Activated naive CD4-positive, alpha-beta T cell treated with anti-CD3 and anti-CD28 coated beads for 36 hours (primary cell): ENCODE measurements at regions of chr11 and their contacts with region 1.

Region 1: GRCh38 chr11:32583459-32584271 is at the start of gene EIF3M:
- DNase-seq: peak; percentile 97
- H3K4me3 Mint-ChIP-seq: peak within 1 kb of the TSS; percentile 95
- H3K27ac Mint-ChIP-seq: peak within 1 kb of the TSS; percentile 94
- H3K4me1 Mint-ChIP-seq: peaks cover 38% of the 10 kb centered on the region
- H3K27me3 Mint-ChIP-seq: no peaks in the 10 kb centered on the region
- total RNA-seq, gene EIF3M: 342 to 358 TPM

Region 2: DNA sequence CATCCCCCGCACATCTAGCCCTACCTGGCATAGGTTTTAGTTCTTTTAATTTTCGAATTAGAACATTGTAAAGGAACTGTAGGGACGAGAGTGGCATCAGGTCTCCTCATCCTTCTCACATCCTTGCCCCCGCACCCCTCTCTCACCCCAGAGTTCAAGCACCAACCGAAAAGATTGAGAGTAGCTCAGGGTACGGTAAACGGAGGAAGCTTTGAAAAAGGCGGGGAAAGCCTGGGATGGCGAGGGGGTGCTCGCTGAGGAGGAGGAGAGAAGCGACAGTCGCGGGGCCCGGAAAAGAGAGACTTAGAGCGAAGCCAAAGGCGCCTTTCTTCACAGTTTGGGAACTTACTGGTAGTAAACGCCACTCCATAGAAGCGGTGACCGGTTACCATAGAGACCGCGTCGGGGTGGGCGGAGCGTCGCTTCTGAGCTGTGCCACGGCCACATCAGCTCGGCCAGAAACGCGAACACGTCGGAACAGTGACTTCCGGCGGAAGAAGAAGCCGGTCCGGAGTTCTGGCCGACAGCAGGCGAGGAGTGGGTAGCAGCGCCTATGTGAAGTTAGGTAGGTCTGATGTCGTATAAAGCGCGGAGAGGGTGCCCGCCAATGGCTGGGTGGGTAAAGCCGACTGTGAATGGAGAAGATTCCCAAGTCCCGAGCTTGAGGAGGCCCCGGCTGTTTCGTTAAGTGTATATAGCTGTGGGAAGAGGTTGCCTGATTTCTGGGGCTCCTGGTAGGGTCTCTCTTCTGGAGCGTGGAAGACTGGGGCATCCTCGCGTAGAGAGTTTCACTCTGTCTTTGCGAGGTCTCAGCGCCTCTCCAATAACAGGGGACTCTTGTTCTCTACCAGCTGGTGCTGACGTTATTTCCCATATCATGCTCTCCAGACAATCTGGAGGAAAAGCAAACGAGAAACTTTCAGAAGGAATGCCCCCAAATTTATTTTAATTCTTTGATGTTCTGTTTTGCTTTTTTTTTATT is 1214.0 kb before region 1 on chr11 and contains the starts of genes DCDC1 and DNAJC24:
- CTCF ChIA-PET with region 1: no interaction called
- intact Hi-C with region 1: loop called (anchors 5 kb)
- DNase-seq: peak; percentile 95
- H3K4me3 Mint-ChIP-seq: peak within 1 kb of the TSS; percentile 99
- H3K27ac Mint-ChIP-seq: peak within 1 kb of the TSS; percentile 91
- H3K4me1 Mint-ChIP-seq: peaks cover 55% of the 10 kb centered on the region
- H3K27me3 Mint-ChIP-seq: no peaks in the 10 kb centered on the region
- total RNA-seq, gene DCDC1: 0.25 TPM in 1 of 2 experiments, not detected in the other
- total RNA-seq, gene DNAJC24: 14.2 to 14.6 TPM

Region 3: DNA sequence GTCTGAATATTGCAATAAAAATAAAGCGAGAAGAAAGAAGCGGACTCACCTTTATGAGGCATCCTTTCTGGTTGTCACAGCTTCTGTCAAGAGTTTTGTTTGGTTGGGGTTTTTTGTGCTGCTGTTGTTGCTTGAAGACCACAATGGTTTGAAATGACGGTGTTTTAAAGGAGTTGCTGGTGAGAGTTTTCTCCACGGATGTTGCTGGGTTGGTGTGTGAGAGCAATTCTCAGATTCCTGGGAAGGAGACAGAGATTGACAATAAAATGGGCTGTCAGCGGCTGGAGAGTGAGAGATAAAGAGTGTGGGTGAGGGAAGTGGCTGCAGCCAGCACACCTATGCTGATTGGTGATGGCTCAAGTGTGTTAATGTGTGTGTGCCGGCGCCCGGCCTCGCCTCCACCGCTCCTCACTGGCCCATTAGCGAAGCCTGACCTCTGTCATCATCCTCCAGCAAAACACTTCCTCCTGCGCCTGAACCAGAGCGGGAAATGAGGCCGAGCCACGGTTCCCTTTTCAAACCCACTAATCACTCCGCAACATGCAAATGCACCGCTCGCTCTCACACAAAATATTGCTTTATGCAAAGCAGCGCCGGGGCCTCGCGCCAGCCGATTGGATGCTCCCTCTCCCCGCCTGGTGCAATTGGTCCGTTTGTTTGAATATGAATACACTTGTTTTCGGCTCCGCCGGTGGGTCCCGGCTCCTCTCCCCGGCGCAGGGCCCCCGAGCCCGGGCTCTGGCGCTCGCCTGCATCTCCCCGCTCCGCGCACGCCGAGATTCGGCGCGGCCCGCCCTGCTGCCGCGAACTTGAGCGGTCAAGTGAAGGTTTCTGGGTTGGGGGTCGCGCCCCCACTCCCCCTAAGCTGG is 772.7 kb before region 1 on chr11 and contains the start of gene PAX6:
- CTCF ChIA-PET with region 1: no interaction called
- intact Hi-C with region 1: loop called (anchors 10 kb)
- DNase-seq: peak; percentile 82
- H3K4me3 Mint-ChIP-seq: peak within 1 kb of the TSS; percentile 73
- H3K27ac Mint-ChIP-seq: no peak within 1 kb of the TSS
- H3K4me1 Mint-ChIP-seq: peaks cover 47% of the 10 kb centered on the region
- H3K27me3 Mint-ChIP-seq: peaks cover 76% of the 10 kb centered on the region
- total RNA-seq, gene PAX6: 1.5 TPM

Region 4: DNA sequence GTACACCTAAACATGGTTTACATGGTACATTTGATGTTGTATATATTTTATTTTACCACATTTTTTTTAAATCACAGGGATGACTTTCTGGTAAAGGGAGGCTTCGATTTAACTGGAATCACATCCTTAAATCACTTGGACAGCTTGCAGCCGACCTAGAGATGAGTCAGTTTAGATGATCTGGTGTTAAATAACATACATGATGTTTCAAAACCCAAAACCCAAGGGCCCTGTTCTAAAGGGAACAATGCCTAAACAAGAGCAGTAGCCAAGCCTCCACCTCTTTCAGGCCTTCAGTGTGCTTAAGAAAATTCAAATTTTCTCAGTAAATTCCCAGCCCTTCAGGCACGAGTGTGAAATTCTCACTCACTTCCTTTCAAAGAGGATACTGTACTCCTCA is 257.1 kb before region 1 on chr11:
- CTCF ChIA-PET with region 1: interaction called, 3 read pairs
- intact Hi-C with region 1: loop called (anchors 10 kb)
- DNase-seq: no peak
- H3K4me3 Mint-ChIP-seq: no peak overlapping the region
- H3K27ac Mint-ChIP-seq: no peak overlapping the region
- H3K4me1 Mint-ChIP-seq: no peaks in the 10 kb centered on the region
- H3K27me3 Mint-ChIP-seq: peaks cover 17% of the 10 kb centered on the region

Region 5: DNA sequence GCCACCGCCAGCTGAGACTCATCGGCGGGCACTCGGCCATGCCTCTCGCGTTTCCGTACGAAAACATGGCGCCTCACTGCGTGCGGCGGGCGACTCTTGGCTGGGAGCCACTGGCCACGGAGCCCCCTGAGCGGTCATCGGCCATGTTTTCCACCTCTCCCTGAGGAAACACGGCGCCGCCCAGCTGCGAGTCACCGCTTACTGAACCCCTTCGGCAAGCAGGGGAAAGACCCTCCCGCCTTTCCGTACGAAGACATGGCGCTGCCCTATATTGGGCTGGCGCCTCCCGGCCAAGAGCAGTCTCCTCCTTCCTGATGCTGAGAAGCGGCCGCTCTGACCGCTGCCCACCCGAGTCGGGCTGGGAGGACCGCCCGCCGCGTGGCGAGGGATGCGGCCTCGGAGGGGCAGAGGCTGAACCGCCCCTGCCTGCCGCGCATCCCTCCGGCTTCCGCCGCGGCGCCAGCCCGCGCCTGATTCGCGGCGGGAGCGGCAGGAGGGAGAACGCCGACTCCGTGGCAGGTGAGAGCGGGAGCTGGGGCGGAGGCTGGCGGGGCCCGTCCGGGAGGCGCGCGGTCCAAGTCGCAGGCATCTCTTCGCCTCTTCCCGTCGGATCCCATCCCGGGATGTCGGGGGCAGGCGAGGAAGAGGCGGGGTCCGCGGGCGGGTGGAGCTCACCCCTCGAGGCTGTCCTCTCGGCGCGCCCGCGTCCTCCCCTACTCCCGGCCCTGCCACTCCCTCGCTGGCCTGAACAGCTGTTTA is 455.8 kb after region 1 on chr11 and contains the start of gene TCP11L1:
- CTCF ChIA-PET with region 1: no interaction called
- intact Hi-C with region 1: loop called (anchors 2 kb)
- DNase-seq: peak; percentile 88
- H3K4me3 Mint-ChIP-seq: peak within 1 kb of the TSS; percentile 85
- H3K27ac Mint-ChIP-seq: peak within 1 kb of the TSS; percentile 92
- H3K4me1 Mint-ChIP-seq: peaks cover 25% of the 10 kb centered on the region
- H3K27me3 Mint-ChIP-seq: no peaks in the 10 kb centered on the region
- total RNA-seq, gene TCP11L1: 4.8 to 5.7 TPM

Region 6: DNA sequence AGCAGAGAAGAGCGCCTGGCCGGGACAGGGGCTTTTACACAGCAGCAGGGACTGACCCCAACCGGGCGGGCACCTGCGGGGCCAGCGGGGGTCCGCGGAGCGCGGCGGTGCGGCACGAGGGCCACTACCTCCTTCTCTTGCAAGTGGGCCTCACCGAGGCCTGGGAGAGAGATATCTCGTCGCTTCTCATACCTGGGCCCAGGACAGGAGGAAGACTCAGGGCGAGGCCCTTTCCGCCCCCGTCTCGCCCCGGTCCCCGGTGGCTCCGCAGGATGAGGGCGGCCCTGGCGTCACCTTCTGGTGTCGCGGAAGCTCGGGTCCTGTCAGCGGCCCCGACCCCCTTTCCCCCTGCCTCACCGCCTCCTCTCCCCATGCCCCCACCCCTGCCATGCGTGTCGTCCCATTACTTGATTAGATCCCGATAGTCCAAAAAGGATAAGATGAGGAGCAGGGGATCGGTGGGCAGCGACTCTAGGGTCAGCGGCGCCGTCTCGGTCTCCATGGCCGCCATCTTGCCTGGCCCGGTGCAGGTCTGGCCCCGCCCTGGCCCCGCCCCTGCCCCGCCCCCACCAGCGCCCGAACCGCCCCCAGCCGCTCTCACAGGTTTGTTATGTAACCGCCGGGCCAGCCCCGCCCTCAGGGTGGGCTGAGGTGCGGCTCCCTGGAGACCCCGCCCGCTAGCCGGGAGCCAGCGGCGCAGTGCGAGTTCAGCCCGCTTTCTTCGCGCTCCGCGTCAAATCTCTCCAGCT is 1190.5 kb after region 1 on chr11 and contains the start of gene FBXO3:
- CTCF ChIA-PET with region 1: no interaction called
- intact Hi-C with region 1: loop called (anchors 10 kb)
- DNase-seq: peak; percentile 82
- H3K4me3 Mint-ChIP-seq: peak within 1 kb of the TSS; percentile 90
- H3K27ac Mint-ChIP-seq: peak within 1 kb of the TSS; percentile 85
- H3K4me1 Mint-ChIP-seq: peaks cover 40% of the 10 kb centered on the region
- H3K27me3 Mint-ChIP-seq: peaks cover 12% of the 10 kb centered on the region
- total RNA-seq, gene FBXO3: 12.2 to 12.9 TPM